GM12878 (cell line): ENCODE measurements at regions of chr11 and their contacts with region 1.

Region 1: GRCh38 chr11:76152086-76152681 is 54.1 kb downstream of the WNT11 start:
- DNase-seq: peak; percentile 60
- ATAC-seq: peak; percentile 87
- H3K4me3 ChIP-seq: peak overlapping the region; percentile 66
- H3K27ac ChIP-seq: peak overlapping the region; percentile 27
- H3K4me1 ChIP-seq: peaks cover 22% of the 10 kb centered on the region
- H3K27me3 ChIP-seq: no peaks in the 10 kb centered on the region
- CTCF ChIP-seq: peak; percentile 97 to 99 (median 98); a peak in 5 of 6 replicates
- EP300 ChIP-seq: no peak
- POLR2A ChIP-seq: 0 out of 2 replicates have a peak, but pooled peaks have one; percentile 19
- RAD21 ChIP-seq: peak; percentile 97

Region 2: DNA sequence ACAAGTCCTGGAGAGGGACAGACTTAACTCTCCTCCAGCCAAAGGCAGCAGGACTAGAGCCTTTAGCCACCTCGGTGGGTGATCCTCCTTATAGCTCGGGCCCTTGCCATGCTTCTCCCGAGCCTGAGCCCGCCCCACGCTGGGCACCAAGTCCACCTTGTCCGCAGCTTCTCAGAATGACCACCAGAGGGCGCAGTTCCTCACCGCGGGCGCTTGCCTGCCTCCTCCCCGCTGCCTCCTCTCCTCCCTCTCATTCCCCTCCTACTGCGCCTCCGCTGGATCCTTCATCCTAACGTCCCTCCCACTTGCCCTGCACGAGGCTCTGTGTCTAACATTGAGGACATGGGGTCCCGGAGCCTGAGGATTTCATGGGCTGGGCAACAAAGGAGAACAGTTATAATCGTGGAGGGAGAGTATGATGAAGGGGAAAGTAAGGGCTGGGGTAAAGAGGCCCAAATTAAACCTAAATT is 445.9 kb before region 1 on chr11:
- CTCF ChIA-PET with region 1: interaction called, 13 read pairs
- POLR2A ChIA-PET with region 1: no interaction called
- RAD21 ChIA-PET with region 1: interaction called, 6 read pairs
- SMC1A ChIA-PET with region 1: interaction called, 6 read pairs
- in situ Hi-C with region 1: no loop called
- intact Hi-C with region 1: no loop called
- DNase-seq: no peak
- ATAC-seq: peak; percentile 99
- H3K4me3 ChIP-seq: no peak overlapping the region
- H3K27ac ChIP-seq: no peak overlapping the region
- H3K4me1 ChIP-seq: no peaks in the 10 kb centered on the region
- H3K27me3 ChIP-seq: no peaks in the 10 kb centered on the region
- CTCF ChIP-seq: peak; percentile 84 to 96 (median 94)
- EP300 ChIP-seq: no peak
- POLR2A ChIP-seq: no peak
- RAD21 ChIP-seq: peak; percentile 53

Region 3: GRCh38 chr11:75814686-75815344 is 337.4 kb before region 1 on chr11 and contains the start of gene UVRAG:
- CTCF ChIA-PET with region 1: interaction called, 34 read pairs
- POLR2A ChIA-PET with region 1: no interaction called
- RAD21 ChIA-PET with region 1: interaction called, 16 read pairs
- SMC1A ChIA-PET with region 1: interaction called, 7 read pairs
- in situ Hi-C with region 1: no loop called
- intact Hi-C with region 1: no loop called
- DNase-seq: peak; percentile 100
- ATAC-seq: peak; percentile 86
- H3K4me3 ChIP-seq: peak within 1 kb of the TSS; percentile 93
- H3K27ac ChIP-seq: peak within 1 kb of the TSS; percentile 94
- H3K4me1 ChIP-seq: peaks cover 39% of the 10 kb centered on the region
- H3K27me3 ChIP-seq: no peaks in the 10 kb centered on the region
- CTCF ChIP-seq: no peak
- EP300 ChIP-seq: no peak
- POLR2A ChIP-seq: peak; percentile 87
- RAD21 ChIP-seq: no peak
- polyA plus RNA-seq, gene UVRAG: 7.0 to 11.2 TPM

Region 4: DNA sequence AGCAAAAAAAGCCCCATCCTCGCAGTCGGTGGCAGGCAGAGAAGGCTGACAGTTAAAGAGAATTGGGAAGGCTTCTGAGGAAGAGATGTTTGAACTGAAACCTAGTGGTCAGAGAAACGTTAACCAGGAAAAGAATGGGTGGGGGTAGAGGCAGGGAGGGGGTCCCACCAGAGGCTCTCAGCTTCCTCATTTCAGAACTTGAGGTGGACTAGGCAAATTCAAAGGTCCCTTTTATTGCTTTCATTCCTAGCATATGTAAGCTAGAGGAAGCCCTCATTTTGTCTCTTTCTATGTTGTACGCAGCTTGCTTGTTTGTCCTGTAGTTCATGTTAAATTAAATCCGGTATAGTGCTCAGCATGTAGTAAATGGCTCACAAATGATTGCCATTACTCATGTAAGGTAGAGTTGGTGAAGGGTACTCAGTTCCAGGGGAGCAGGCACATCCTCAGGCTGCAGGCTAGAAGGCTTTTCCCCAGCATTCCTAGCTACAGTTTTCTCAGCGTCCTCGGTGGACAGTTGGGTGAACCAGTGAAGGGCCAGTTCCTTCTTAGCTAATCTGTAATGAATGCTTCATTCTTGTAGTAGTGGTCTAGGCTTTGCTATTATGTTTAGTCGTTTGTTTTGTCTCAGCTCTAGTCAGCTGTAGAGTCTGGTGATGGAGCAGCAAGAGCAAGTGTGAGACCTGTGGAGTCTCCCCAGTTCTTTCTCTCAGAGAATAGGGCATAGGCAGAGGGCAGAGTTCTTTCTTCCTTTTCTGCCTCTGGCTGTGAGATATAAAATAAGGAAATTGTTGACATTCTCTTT is 278.6 kb before region 1 on chr11:
- CTCF ChIA-PET with region 1: interaction called, 30 read pairs
- POLR2A ChIA-PET with region 1: interaction called, 6 read pairs
- RAD21 ChIA-PET with region 1: interaction called, 18 read pairs
- SMC1A ChIA-PET with region 1: interaction called, 22 read pairs
- in situ Hi-C with region 1: no loop called
- intact Hi-C with region 1: no loop called
- DNase-seq: peak; percentile 73
- ATAC-seq: peak; percentile 90
- H3K4me3 ChIP-seq: peak overlapping the region; percentile 25
- H3K27ac ChIP-seq: peak overlapping the region; percentile 84
- H3K4me1 ChIP-seq: peaks cover 26% of the 10 kb centered on the region
- H3K27me3 ChIP-seq: no peaks in the 10 kb centered on the region
- CTCF ChIP-seq: no peak
- EP300 ChIP-seq: peak; percentile 14 to 53; a peak in 2 of 4 replicates
- POLR2A ChIP-seq: no peak
- RAD21 ChIP-seq: no peak

Region 5: GRCh38 chr11:75903276-75903675 is 248.9 kb before region 1 on chr11:
- CTCF ChIA-PET with region 1: interaction called, 139 read pairs
- POLR2A ChIA-PET with region 1: no interaction called
- RAD21 ChIA-PET with region 1: interaction called, 75 read pairs
- SMC1A ChIA-PET with region 1: interaction called, 128 read pairs
- in situ Hi-C with region 1: loop called (anchors 5 kb)
- intact Hi-C with region 1: no loop called
- DNase-seq: no peak
- ATAC-seq: no peak
- H3K4me3 ChIP-seq: no peak overlapping the region
- H3K27ac ChIP-seq: no peak overlapping the region
- H3K4me1 ChIP-seq: peaks cover 19% of the 10 kb centered on the region
- H3K27me3 ChIP-seq: no peaks in the 10 kb centered on the region
- CTCF ChIP-seq: no peak
- EP300 ChIP-seq: no peak
- POLR2A ChIP-seq: no peak
- RAD21 ChIP-seq: no peak

Region 6: DNA sequence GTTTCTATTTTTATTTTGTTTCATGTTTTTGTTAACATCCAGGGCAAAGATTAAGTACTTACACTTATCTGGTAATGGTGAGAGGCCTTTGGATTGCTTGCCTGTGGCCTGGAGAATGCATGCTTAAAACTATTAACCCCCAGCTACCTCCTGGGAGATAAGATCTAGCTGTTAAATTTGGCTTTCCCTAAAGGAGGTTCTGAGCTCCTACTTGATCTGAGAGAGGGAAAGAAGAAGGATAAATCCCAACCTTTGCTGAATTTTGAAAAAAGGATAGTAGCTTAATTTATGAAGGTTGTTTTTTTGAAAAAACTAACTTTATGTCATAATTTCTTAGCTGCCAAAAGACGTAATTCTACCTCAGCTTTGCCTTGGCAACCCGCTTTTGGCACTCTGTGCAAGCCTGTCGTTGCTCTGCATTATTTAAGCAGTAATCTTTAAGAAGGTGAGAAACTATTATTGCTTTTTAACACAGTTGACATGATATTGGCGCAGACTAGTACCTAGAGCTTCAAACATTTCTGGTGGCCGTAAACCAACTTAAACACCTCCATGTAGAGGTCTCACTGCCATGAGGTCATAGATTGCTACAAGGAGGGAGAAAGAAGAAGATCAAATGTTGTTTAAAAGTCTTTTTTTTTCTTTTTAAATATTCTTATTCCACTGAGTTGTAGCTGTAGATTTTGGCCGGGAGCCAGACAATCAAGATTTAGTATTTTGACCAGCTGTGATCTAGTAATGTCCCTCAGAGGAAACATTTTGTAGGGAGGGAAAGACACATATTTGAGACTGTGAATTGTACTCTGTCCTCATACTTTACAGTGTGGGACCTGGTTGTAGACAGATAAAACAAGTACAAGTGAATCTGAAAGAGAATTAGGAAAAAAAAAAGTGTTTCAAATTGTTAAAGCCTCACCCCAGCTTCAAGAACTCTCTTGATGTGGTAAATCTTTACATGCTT is 20.2 kb before region 1 on chr11:
- CTCF ChIA-PET with region 1: interaction called, 26 read pairs
- POLR2A ChIA-PET with region 1: no interaction called
- RAD21 ChIA-PET with region 1: interaction called, 3 read pairs
- SMC1A ChIA-PET with region 1: interaction called, 7 read pairs
- in situ Hi-C with region 1: no loop called
- intact Hi-C with region 1: no loop called
- DNase-seq: no peak
- ATAC-seq: no peak
- H3K4me3 ChIP-seq: no peak overlapping the region
- H3K27ac ChIP-seq: no peak overlapping the region
- H3K4me1 ChIP-seq: no peaks in the 10 kb centered on the region
- H3K27me3 ChIP-seq: no peaks in the 10 kb centered on the region
- CTCF ChIP-seq: no peak
- EP300 ChIP-seq: no peak
- POLR2A ChIP-seq: no peak
- RAD21 ChIP-seq: no peak